ENCODE measurements at regions of chr3 and their contacts with region 1.

Region 1: GRCh38 chr3:48151058-48151806 is 37.0 kb downstream of the CDC25A start:
- DNase-seq: peak; percentile 84
- CTCF ChIP-seq: peak; percentile 80

Region 2: GRCh38 chr3:47542471-47543173 is 608.6 kb before region 1 on chr3:
- in situ Hi-C with region 1: loop called (anchors 25 kb)
- DNase-seq: no peak
- CTCF ChIP-seq: no peak

Region 3: DNA sequence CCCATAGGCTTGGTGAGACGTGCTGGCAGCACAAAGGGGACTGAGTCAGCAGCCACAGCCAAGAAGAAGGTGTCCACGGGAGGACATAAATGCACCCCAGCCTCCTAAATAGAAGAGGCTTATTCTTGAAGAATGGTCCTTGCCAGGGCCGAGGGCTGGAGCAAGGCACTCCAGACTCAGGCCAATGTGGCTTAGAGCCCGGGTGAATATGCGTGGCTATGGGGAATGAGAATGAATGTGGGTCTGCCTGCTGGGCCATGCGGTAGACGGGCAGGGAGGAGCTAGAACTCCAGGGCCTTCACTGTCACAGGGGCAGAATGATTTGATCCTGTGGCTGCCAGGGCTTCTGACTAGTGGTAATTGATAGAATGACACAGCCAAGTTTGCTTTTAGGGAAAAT is 314.2 kb before region 1 on chr3:
- in situ Hi-C with region 1: loop called (anchors 10 kb)
- DNase-seq: no peak
- CTCF ChIP-seq: no peak

Region 4: GRCh38 chr3:47989981-47990440 is 161.2 kb before region 1 on chr3:
- in situ Hi-C with region 1: loop called (anchors 10 kb)
- DNase-seq: peak; percentile 69
- CTCF ChIP-seq: peak; percentile 93